Caco-2 (cell line): ENCODE measurements at regions of chr10 and their contacts with region 1.

Region 1: GRCh38 chr10:68981074-68981473 is 7.5 kb upstream of the KIFBP start:
- DNase-seq: peak in 1 of 2 experiments; percentile 43
- H3K4me3 ChIP-seq: no peak overlapping the region
- H3K4me3 Mint-ChIP-seq: no peak overlapping the region
- H3K27ac Mint-ChIP-seq: peak overlapping the region; percentile 36
- H3K4me1 ChIP-seq: peaks cover 7% of the 10 kb centered on the region; the same call in 1 of the 2 replicates
- H3K4me1 Mint-ChIP-seq: peaks cover 15% of the 10 kb centered on the region
- H3K27me3 ChIP-seq: no peaks in the 10 kb centered on the region
- H3K27me3 Mint-ChIP-seq: no peaks in the 10 kb centered on the region
- CTCF ChIP-seq: peak; percentile 69 to 70

Region 2: DNA sequence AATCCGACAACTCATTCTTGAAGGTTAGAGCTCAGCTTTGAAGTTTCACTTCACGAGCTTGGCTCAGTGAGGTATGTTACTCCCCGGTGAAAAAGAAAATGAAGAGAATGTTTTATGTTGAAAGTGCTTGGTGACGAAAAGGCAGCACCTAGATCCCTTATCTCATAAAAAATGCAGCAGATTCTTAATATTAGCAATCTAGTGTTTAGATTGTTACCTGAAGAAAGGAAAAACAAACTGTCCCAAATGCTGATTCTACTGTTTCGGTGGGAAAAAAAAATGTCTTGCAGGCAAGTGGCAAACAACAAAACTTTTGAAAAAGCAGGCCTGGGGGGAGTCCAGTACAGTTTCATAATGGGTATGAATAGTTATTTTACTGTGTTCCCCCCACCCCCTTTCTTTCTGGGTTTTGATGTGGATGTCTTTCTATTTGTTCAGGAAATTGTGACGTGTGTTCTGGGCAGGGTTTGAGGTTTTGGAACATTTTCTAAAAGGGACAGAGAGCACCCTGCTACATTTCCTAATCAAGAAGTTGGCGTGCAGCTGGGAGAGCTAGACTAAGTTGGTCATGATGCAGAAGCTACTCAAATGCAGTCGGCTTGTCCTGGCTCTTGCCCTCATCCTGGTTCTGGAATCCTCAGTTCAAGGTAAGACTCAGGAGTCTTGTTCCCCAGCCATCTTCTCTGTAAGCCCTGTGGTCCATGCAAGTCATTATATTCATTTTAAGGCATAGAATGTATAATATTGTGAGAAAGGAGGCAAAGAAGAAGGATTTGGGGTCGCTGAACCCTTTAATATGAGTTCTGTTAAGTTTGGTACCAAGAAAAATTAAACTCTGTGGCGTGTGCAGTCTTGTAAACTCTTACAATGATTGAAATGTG is 106.8 kb after region 1 on chr10 and contains the start of gene SRGN:
- CTCF ChIA-PET with region 1: interaction called, 10 read pairs
- POLR2A ChIA-PET with region 1: no interaction called
- intact Hi-C with region 1: loop called (anchors 1 kb)
- DNase-seq: no peak
- H3K4me3 ChIP-seq: no peak within 1 kb of the TSS
- H3K4me3 Mint-ChIP-seq: no peak within 1 kb of the TSS
- H3K27ac Mint-ChIP-seq: no peak within 1 kb of the TSS
- H3K4me1 ChIP-seq: no peaks in the 10 kb centered on the region
- H3K4me1 Mint-ChIP-seq: no peaks in the 10 kb centered on the region
- H3K27me3 ChIP-seq: no peaks in the 10 kb centered on the region; the same call in 1 of the 2 replicates
- H3K27me3 Mint-ChIP-seq: peaks cover 13% of the 10 kb centered on the region
- CTCF ChIP-seq: no peak
- total RNA-seq, gene SRGN: not detected in 2 replicates